BJ (cell line): ENCODE measurements at regions of chr1 and their contacts with region 1.

Region 1: DNA sequence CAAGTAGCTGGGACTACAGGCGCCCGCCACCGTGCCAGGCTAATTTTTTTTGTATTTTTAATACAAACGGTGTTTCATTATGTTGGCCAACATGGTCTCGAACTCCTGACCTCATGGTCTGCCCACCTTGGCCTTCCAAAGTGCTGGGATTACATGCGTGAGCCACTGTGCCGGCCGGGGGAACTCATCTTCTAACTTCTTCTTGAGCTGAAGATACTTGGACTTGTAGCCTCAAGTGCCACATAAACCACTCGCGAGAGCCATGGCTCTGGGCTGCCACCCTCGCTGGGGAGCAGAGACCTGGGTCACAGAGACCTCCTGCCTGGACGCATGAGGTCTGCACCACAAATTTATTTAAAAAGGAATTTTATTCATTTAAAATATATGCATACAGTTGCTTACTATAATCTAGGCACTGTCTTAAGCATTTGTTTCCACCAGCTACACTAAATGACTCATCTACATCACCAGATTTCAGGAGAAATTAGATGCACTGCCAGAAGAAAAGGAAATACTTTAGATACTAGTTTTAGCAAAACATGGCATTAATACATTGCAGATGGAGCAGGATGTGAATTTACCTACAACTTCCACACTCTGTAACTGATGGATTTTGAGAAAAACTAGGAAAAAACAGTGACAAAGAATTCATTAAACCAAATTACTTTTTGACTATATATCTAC is 29.9 kb upstream of the PUM1 start:
- DNase-seq: peak; percentile 68
- H3K4me3 ChIP-seq: no peak overlapping the region
- H3K27me3 ChIP-seq: no peaks in the 10 kb centered on the region
- CTCF ChIP-seq: no peak

Region 2: GRCh38 chr1:31010086-31010989 is 85.1 kb before region 1 on chr1:
- CTCF ChIA-PET with region 1: no interaction called
- POLR2A ChIA-PET with region 1: no interaction called
- DNase-seq: peak; percentile 35
- H3K4me3 ChIP-seq: no peak overlapping the region
- H3K27me3 ChIP-seq: no peaks in the 10 kb centered on the region
- CTCF ChIP-seq: no peak

Region 3: DNA sequence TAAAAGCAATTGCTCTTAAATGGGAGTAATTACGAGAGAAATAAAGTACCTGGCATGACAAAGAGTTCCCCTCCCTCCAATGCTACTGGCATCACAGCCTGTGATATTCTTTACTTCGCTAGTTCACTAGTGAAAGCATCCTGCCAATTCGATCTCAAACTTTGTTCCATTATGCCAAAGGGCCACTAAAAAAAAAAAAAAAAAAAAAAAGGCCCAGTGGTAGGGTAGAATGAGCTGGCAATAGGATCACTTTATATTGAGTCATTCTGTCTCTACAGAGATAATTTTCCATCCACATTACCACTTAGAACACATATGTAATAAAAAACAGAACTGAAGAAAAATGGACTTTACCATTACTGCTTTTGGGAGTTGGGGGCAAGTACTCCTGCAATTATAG is 41.1 kb before region 1 on chr1:
- CTCF ChIA-PET with region 1: interaction called, 4 read pairs
- POLR2A ChIA-PET with region 1: interaction called, 12 read pairs
- DNase-seq: no peak
- H3K4me3 ChIP-seq: no peak overlapping the region
- H3K27me3 ChIP-seq: no peaks in the 10 kb centered on the region
- CTCF ChIP-seq: no peak

Region 4: GRCh38 chr1:31264790-31265386 is 169.4 kb after region 1 on chr1:
- CTCF ChIA-PET with region 1: no interaction called
- POLR2A ChIA-PET with region 1: no interaction called
- DNase-seq: no peak
- H3K4me3 ChIP-seq: no peak overlapping the region
- H3K27me3 ChIP-seq: no peaks in the 10 kb centered on the region
- CTCF ChIP-seq: no peak